CD8-positive, alpha-beta T cell (primary cell): ENCODE measurements at regions of chr10 and their contacts with region 1.

Region 1: GRCh38 chr10:5684318-5684970 is at the start of gene TASOR2:
- DNase-seq: peak; percentile 86 to 98 (median 97)
- ATAC-seq: peak; percentile 88
- H3K4me3 ChIP-seq: peak within 1 kb of the TSS; percentile 76 to 88
- H3K4me3 Mint-ChIP-seq: peak within 1 kb of the TSS; percentile 92
- H3K27ac ChIP-seq: peak within 1 kb of the TSS; percentile 85
- H3K27ac Mint-ChIP-seq: peak within 1 kb of the TSS; percentile 96
- H3K4me1 ChIP-seq: peaks cover 37% of the 10 kb centered on the region
- H3K4me1 Mint-ChIP-seq: peaks cover 43% of the 10 kb centered on the region
- H3K27me3 ChIP-seq: no peaks in the 10 kb centered on the region
- H3K27me3 Mint-ChIP-seq: no peaks in the 10 kb centered on the region
- CTCF ChIP-seq: no peak
- total RNA-seq, gene TASOR2: 52.7 to 61.2 TPM

Region 2: GRCh38 chr10:3873728-3874461 is 1810.5 kb before region 1 on chr10:
- CTCF ChIA-PET with region 1: no interaction called
- POLR2A ChIA-PET with region 1: no interaction called
- intact Hi-C with region 1: no loop called
- DNase-seq: peak in 4 of 9 experiments; percentile 7 to 91 (median 50)
- ATAC-seq: peak; percentile 55
- H3K4me3 ChIP-seq: no peak overlapping the region
- H3K4me3 Mint-ChIP-seq: no peak overlapping the region
- H3K27ac ChIP-seq: peak overlapping the region; percentile 26 to 95
- H3K27ac Mint-ChIP-seq: peak overlapping the region; percentile 88
- H3K4me1 ChIP-seq: peaks cover 25% of the 10 kb centered on the region
- H3K4me1 Mint-ChIP-seq: peaks cover 43% of the 10 kb centered on the region
- H3K27me3 ChIP-seq: no peaks in the 10 kb centered on the region
- H3K27me3 Mint-ChIP-seq: no peaks in the 10 kb centered on the region
- CTCF ChIP-seq: no peak

Region 3: GRCh38 chr10:5033061-5033770 is 651.2 kb before region 1 on chr10:
- CTCF ChIA-PET with region 1: no interaction called
- POLR2A ChIA-PET with region 1: no interaction called
- intact Hi-C with region 1: no loop called
- DNase-seq: no peak
- ATAC-seq: no peak
- H3K4me3 ChIP-seq: no peak overlapping the region
- H3K4me3 Mint-ChIP-seq: no peak overlapping the region
- H3K27ac ChIP-seq: no peak overlapping the region
- H3K27ac Mint-ChIP-seq: no peak overlapping the region
- H3K4me1 ChIP-seq: no peaks in the 10 kb centered on the region
- H3K4me1 Mint-ChIP-seq: no peaks in the 10 kb centered on the region
- H3K27me3 ChIP-seq: no peaks in the 10 kb centered on the region
- H3K27me3 Mint-ChIP-seq: peaks cover 2% of the 10 kb centered on the region
- CTCF ChIP-seq: no peak

Region 4: GRCh38 chr10:5446390-5446926 is 238.0 kb before region 1 on chr10:
- CTCF ChIA-PET with region 1: no interaction called
- POLR2A ChIA-PET with region 1: no interaction called
- intact Hi-C with region 1: loop called in 1 of 2 experiments (anchors 1 kb)
- DNase-seq: peak; percentile 42 to 83 (median 73)
- ATAC-seq: peak; percentile 67
- H3K4me3 ChIP-seq: peak overlapping the region; percentile 32 to 54
- H3K4me3 Mint-ChIP-seq: peak overlapping the region; percentile 85
- H3K27ac ChIP-seq: peak overlapping the region in 1 of 2 experiments; percentile 45
- H3K27ac Mint-ChIP-seq: peak overlapping the region; percentile 87
- H3K4me1 ChIP-seq: peaks cover 25% of the 10 kb centered on the region
- H3K4me1 Mint-ChIP-seq: peaks cover 32% of the 10 kb centered on the region
- H3K27me3 ChIP-seq: no peaks in the 10 kb centered on the region
- H3K27me3 Mint-ChIP-seq: no peaks in the 10 kb centered on the region
- CTCF ChIP-seq: no peak

Region 5: GRCh38 chr10:5640501-5640900 is 43.9 kb before region 1 on chr10:
- CTCF ChIA-PET with region 1: no interaction called
- POLR2A ChIA-PET with region 1: no interaction called
- intact Hi-C with region 1: no loop called
- DNase-seq: no peak
- ATAC-seq: no peak
- H3K4me3 ChIP-seq: no peak overlapping the region
- H3K4me3 Mint-ChIP-seq: no peak overlapping the region
- H3K27ac ChIP-seq: no peak overlapping the region
- H3K27ac Mint-ChIP-seq: no peak overlapping the region
- H3K4me1 ChIP-seq: no peaks in the 10 kb centered on the region
- H3K4me1 Mint-ChIP-seq: no peaks in the 10 kb centered on the region
- H3K27me3 ChIP-seq: no peaks in the 10 kb centered on the region
- H3K27me3 Mint-ChIP-seq: no peaks in the 10 kb centered on the region
- CTCF ChIP-seq: no peak

Region 6: GRCh38 chr10:5710859-5711258 is 26.4 kb after region 1 on chr10:
- CTCF ChIA-PET with region 1: no interaction called
- POLR2A ChIA-PET with region 1: interaction called, 3 read pairs
- intact Hi-C with region 1: loop called (anchors 1 to 2 kb)
- DNase-seq: peak in 1 of 9 experiments; percentile 35
- ATAC-seq: peak; percentile 61
- H3K4me3 ChIP-seq: peak overlapping the region; percentile 7 to 39
- H3K4me3 Mint-ChIP-seq: peak overlapping the region; percentile 78
- H3K27ac ChIP-seq: peak overlapping the region in 1 of 2 experiments; percentile 41
- H3K27ac Mint-ChIP-seq: no peak overlapping the region
- H3K4me1 ChIP-seq: peaks cover 41% of the 10 kb centered on the region
- H3K4me1 Mint-ChIP-seq: peaks cover 77% of the 10 kb centered on the region
- H3K27me3 ChIP-seq: no peaks in the 10 kb centered on the region
- H3K27me3 Mint-ChIP-seq: no peaks in the 10 kb centered on the region
- CTCF ChIP-seq: no peak

Region 7: GRCh38 chr10:5813287-5814109 is 129.1 kb after region 1 on chr10 and contains the start of gene GDI2:
- CTCF ChIA-PET with region 1: no interaction called
- POLR2A ChIA-PET with region 1: interaction called, 4 read pairs
- intact Hi-C with region 1: loop called (anchors 1 kb)
- DNase-seq: peak; percentile 91 to 98 (median 96)
- ATAC-seq: peak; percentile 93
- H3K4me3 ChIP-seq: peak within 1 kb of the TSS; percentile 68 to 83
- H3K4me3 Mint-ChIP-seq: peak within 1 kb of the TSS; percentile 86
- H3K27ac ChIP-seq: peak within 1 kb of the TSS; percentile 87 to 93
- H3K27ac Mint-ChIP-seq: peak within 1 kb of the TSS; percentile 87
- H3K4me1 ChIP-seq: peaks cover 48% of the 10 kb centered on the region
- H3K4me1 Mint-ChIP-seq: peaks cover 56% of the 10 kb centered on the region
- H3K27me3 ChIP-seq: no peaks in the 10 kb centered on the region
- H3K27me3 Mint-ChIP-seq: no peaks in the 10 kb centered on the region
- CTCF ChIP-seq: no peak
- total RNA-seq, gene GDI2: 62.1 to 70.5 TPM

Region 8: GRCh38 chr10:5889624-5890451 is 205.4 kb after region 1 on chr10 and contains the starts of genes ANKRD16 and FBH1:
- CTCF ChIA-PET with region 1: no interaction called
- POLR2A ChIA-PET with region 1: no interaction called
- intact Hi-C with region 1: loop called (anchors 1 to 2 kb)
- DNase-seq: peak; percentile 93 to 99 (median 97)
- ATAC-seq: peak; percentile 89
- H3K4me3 ChIP-seq: peak within 1 kb of the TSS; percentile 79 to 88
- H3K4me3 Mint-ChIP-seq: peak within 1 kb of the TSS; percentile 90
- H3K27ac ChIP-seq: peak within 1 kb of the TSS; percentile 47 to 63
- H3K27ac Mint-ChIP-seq: peak within 1 kb of the TSS; percentile 81
- H3K4me1 ChIP-seq: peaks cover 19% of the 10 kb centered on the region
- H3K4me1 Mint-ChIP-seq: peaks cover 50% of the 10 kb centered on the region
- H3K27me3 ChIP-seq: no peaks in the 10 kb centered on the region
- H3K27me3 Mint-ChIP-seq: no peaks in the 10 kb centered on the region
- CTCF ChIP-seq: no peak
- total RNA-seq, gene ANKRD16: 1.7 to 2.1 TPM
- total RNA-seq, gene FBH1: 23.5 to 24.8 TPM